Heart left ventricle (tissue), 16 donors: ENCODE measurements at regions of chr2 and their contacts with region 1.

Region 1: GRCh38 chr2:60337140-60337494 is 216.3 kb downstream of the BCL11A start:
- DNase-seq: peak in 3 of 5 donors; percentile 25 to 62 (median 55)
- ATAC-seq: peak; percentile 47 to 84 (median 64)
- H3K4me3 ChIP-seq: no peak overlapping the region
- H3K27ac ChIP-seq: no peak overlapping the region
- H3K4me1 ChIP-seq: peaks cover 0 to 26% (median 0%) of the 10 kb centered on the region in 12 donors
- H3K27me3 ChIP-seq: no peaks in the 10 kb centered on the region
- CTCF ChIP-seq: peak in 9 of 12 donors; percentile 11 to 49 (median 36)
- POLR2A ChIP-seq: no peak

Region 2: GRCh38 chr2:60504049-60504448 is 166.9 kb after region 1 on chr2:
- intact Hi-C with region 1: loop called in 1 of 10 experiments (anchors 10 kb)
- DNase-seq: peak in 2 of 5 donors; percentile 36 to 51
- ATAC-seq: peak in 3 of 4 donors; percentile 31 to 60 (median 53)
- H3K4me3 ChIP-seq: no peak overlapping the region
- H3K27ac ChIP-seq: peak overlapping the region in 2 of 12 donors; percentile 16 to 62
- H3K4me1 ChIP-seq: peaks cover 0 to 73% (median 15%) of the 10 kb centered on the region in 12 donors
- H3K27me3 ChIP-seq: no peaks in the 10 kb centered on the region
- CTCF ChIP-seq: peak in 5 of 12 donors; percentile 11 to 32 (median 23)
- POLR2A ChIP-seq: no peak

Region 3: DNA sequence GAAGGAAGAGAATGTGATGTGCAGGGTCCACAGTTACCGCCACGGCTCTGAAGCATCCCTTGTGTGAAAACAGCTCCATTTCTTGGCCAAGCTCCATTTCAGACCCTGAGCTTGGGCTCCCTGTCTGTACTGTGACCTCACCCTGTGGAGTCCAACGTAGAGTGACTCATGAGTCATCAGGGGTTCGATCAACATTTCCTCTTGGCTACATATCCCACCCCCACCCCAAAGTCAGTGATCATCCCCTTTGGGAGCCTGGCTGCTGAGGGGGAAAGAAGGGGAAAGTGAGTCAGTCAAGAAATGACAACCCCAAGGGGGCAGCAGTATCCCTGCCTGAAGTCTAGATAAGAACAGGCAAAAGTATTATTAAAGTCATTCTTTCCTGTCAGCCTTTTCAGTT is 481.2 kb after region 1 on chr2:
- intact Hi-C with region 1: no loop called
- DNase-seq: no peak
- ATAC-seq: no peak
- H3K4me3 ChIP-seq: no peak overlapping the region
- H3K27ac ChIP-seq: no peak overlapping the region
- H3K4me1 ChIP-seq: peaks cover 0 to 15% (median 0%) of the 10 kb centered on the region in 12 donors
- H3K27me3 ChIP-seq: no peaks in the 10 kb centered on the region
- CTCF ChIP-seq: peak in 2 of 12 donors; percentile 5 to 10
- POLR2A ChIP-seq: no peak